ENCODE measurements at regions of chrX and their contacts with region 1.

Region 1: DNA sequence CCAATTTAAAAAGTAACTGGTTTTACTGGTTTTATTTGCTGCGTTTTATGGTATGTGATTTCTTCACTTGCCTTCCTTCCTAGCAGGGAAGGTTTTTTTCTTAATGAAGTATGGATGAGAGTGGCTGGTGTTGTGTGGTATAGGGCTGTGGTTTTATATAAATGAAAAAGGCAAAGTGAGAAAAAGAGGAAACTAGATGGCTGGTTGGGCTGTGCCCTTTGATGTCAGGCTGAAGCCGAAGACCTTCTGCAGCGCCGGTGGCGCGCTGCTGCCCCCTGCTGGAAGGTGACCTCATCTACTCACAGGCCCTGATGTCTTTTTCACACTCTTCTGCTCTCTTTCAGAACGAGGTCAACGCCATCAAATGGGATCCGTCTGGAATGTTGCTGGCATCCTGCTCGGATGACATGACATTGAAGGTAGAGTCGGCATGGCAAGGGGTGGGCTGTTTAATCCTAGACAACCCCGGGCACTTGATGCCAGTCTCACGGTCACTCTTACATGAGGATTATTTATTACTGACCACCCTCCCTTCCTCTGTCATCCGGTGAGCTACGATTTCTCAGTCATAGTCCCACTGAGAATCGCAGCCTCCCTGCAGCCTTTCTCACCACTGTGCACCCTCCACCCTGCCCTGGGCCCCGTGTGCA is 56.6 kb downstream of the GPR143 start:
- DNase-seq: peak; percentile 71 to 87
- ATAC-seq: peak; percentile 85 to 92 (median 86)
- H3K4me3 ChIP-seq: no peak overlapping the region
- H3K4me3 Mint-ChIP-seq: no peak overlapping the region
- H3K27ac ChIP-seq: no peak overlapping the region
- H3K27ac Mint-ChIP-seq: peak overlapping the region in 1 of 2 donors; percentile 19
- H3K4me1 ChIP-seq: peaks cover 6% of the 10 kb centered on the region
- H3K4me1 Mint-ChIP-seq: peaks cover 7 to 15% of the 10 kb centered on the region in 2 donors
- H3K27me3 ChIP-seq: no peaks in the 10 kb centered on the region
- H3K27me3 Mint-ChIP-seq: no peaks in the 10 kb centered on the region
- CTCF ChIP-seq: peak; percentile 73

Region 2: DNA sequence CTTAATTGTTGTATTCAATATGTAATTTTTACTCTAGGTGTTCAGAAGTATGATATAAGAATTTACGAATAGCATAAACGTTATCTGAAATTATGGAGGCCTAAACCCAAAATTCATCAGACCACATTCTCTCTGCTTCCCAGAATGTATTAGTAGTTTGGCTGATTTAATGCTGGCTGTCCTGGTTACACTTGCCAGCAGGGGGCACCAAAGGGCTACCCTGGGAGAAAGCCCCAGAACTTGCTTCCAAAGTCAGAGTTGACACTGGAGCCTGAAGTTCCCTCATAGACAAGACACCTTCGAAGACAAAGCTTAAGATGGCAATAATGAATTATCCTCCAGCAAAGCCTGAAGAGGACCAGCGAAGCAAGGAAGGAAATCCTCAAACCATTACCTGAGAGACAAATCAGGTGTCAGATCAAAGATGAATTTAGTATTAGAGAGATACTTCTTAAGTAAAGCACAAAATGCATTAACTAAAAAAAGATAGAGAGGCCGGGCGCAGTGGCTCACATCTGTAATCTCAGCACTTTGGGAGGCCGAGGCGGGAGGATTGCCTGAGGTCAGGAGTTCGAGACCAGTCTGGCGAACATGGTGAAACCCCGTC is 965.8 kb before region 1 on chrX:
- intact Hi-C with region 1: loop called (anchors 5 kb)
- DNase-seq: peak; percentile 46 to 71
- ATAC-seq: peak in 2 of 3 donors; percentile 42 to 67
- H3K4me3 ChIP-seq: no peak overlapping the region
- H3K4me3 Mint-ChIP-seq: no peak overlapping the region
- H3K27ac ChIP-seq: no peak overlapping the region
- H3K27ac Mint-ChIP-seq: no peak overlapping the region
- H3K4me1 ChIP-seq: no peaks in the 10 kb centered on the region
- H3K4me1 Mint-ChIP-seq: no peaks in the 10 kb centered on the region
- H3K27me3 ChIP-seq: no peaks in the 10 kb centered on the region
- H3K27me3 Mint-ChIP-seq: peaks cover 3 to 6% of the 10 kb centered on the region in 2 donors
- CTCF ChIP-seq: peak; percentile 65

Region 3: DNA sequence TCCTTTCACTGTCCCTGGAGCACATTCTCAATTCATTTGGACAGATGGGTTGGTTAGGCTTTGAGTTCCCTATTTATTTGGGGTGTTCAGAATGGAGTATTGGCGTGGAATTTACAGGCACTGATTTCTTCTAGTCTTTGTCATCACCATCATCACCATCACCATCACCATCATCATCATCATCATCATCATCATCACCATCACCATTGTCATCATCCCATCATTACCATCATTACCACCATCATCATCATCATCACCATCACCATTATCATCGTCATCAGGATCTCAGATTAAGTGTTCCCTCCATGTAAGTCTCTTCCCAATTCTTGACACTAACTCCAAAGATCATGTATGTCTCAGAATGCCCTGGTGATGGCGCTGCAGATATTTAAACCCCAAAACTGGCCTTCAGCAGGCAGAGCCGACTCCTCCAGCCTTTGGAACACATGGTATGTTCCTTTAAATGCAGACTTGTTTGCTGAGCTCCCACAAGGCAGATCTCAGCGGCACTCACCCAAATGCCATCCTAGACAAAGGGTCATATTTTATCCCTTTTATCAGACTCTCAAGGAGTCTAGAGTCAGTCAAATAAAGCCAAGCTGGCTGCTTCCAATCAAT is 888.0 kb before region 1 on chrX:
- intact Hi-C with region 1: loop called (anchors 10 kb)
- DNase-seq: no peak
- ATAC-seq: no peak
- H3K4me3 ChIP-seq: no peak overlapping the region
- H3K4me3 Mint-ChIP-seq: no peak overlapping the region
- H3K27ac ChIP-seq: no peak overlapping the region
- H3K27ac Mint-ChIP-seq: no peak overlapping the region
- H3K4me1 ChIP-seq: no peaks in the 10 kb centered on the region
- H3K4me1 Mint-ChIP-seq: no peaks in the 10 kb centered on the region
- H3K27me3 ChIP-seq: no peaks in the 10 kb centered on the region
- H3K27me3 Mint-ChIP-seq: peaks cover 11 to 12% of the 10 kb centered on the region in 2 donors
- CTCF ChIP-seq: no peak

Region 4: GRCh38 chrX:9163214-9163681 is 545.8 kb before region 1 on chrX:
- intact Hi-C with region 1: loop called (anchors 5 kb)
- DNase-seq: peak in 1 of 2 donors; percentile 1
- ATAC-seq: no peak
- H3K4me3 ChIP-seq: no peak overlapping the region
- H3K4me3 Mint-ChIP-seq: no peak overlapping the region
- H3K27ac ChIP-seq: no peak overlapping the region
- H3K27ac Mint-ChIP-seq: no peak overlapping the region
- H3K4me1 ChIP-seq: peaks cover 4% of the 10 kb centered on the region
- H3K4me1 Mint-ChIP-seq: peaks cover 21 to 24% of the 10 kb centered on the region in 2 donors
- H3K27me3 ChIP-seq: no peaks in the 10 kb centered on the region
- H3K27me3 Mint-ChIP-seq: peaks cover 5% of the 10 kb centered on the region in 2 donors
- CTCF ChIP-seq: no peak

Region 5: DNA sequence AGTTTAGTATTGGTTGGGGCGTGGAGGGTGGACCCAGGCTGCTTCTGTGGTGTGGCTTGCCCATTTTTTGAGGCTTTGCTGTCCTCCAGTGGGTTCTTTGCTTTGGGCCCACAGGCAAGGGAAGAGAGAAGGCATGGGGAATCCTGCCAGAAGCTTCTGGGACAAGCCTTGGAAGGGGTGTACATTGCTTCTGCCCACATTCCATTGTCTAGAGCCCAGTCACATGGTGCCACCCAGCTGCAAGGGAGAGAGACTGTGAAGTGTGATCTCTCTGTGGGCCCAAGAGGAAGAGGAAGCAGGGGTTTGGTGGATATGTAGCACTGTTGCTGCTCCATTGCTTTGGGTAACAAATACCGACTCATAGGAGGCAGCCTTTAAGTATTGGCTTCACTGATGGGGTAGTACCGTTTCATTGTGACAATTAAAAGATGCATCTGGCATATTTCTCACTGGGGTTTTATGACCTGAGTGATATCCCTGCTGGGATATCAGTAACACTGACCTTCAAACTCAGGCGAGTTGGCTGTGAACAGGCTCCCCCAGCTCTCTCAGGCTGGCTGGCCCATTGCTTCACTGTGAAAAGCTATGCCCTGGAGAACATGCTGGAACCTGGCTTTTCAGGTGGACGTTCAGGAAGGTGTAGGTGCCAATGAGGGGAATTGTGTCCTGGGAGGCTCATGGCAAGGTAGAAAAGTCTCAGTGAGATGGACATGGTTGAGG is 344.0 kb after region 1 on chrX:
- intact Hi-C with region 1: no loop called
- DNase-seq: no peak
- ATAC-seq: peak in 1 of 3 donors; percentile 33
- H3K4me3 ChIP-seq: no peak overlapping the region
- H3K4me3 Mint-ChIP-seq: no peak overlapping the region
- H3K27ac ChIP-seq: no peak overlapping the region
- H3K27ac Mint-ChIP-seq: no peak overlapping the region
- H3K4me1 ChIP-seq: peaks cover 9% of the 10 kb centered on the region
- H3K4me1 Mint-ChIP-seq: peaks cover 0 to 8% of the 10 kb centered on the region in 2 donors
- H3K27me3 ChIP-seq: no peaks in the 10 kb centered on the region
- H3K27me3 Mint-ChIP-seq: no peaks in the 10 kb centered on the region
- CTCF ChIP-seq: no peak

Measured in natural killer cell (primary cell).